ENCODE measurements at regions of chr1 and their contacts with region 1.

Region 1: DNA sequence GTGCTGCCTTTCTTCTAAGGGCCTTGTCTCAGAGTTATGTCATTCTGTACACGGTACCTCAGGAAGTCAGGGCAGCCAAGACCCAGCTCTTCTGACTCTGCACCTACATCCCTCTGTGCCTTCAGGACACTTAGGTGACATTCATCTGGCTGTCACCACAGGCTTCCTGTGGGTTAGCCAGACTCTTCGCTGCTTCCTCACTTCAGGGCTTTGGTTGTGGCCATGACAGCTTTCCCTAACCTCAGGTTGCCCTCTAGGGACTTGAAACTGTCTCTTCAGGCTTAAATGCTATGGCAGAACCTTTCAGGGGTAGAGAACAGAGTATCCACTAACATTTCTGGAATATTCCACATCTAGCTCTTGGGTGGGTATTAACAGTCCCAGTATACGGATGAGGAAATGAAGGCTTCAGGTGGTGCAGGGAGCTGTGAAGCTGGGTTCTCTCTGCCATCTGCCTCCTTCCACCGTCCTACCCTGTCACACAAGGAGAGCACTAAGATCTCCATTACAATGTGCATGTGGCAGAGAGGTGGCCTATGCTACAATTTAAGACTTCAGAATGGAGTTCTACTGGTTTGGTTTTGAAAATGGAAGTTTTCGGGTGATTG is 9.9 kb downstream of the TSSK3 start:
- DNase-seq: no peak
- H3K4me3 ChIP-seq: no peak overlapping the region
- H3K27ac ChIP-seq: no peak overlapping the region
- H3K4me1 ChIP-seq: no peaks in the 10 kb centered on the region
- H3K27me3 ChIP-seq: no peaks in the 10 kb centered on the region
- CTCF ChIP-seq: peak in 1 of 3 experiments; percentile 19; a peak in 1 of 4 replicates
- EP300 ChIP-seq: no peak
- POLR2A ChIP-seq: no peak
- RAD21 ChIP-seq: peak; percentile 33 to 41; a peak in 3 of 4 replicates

Region 2: DNA sequence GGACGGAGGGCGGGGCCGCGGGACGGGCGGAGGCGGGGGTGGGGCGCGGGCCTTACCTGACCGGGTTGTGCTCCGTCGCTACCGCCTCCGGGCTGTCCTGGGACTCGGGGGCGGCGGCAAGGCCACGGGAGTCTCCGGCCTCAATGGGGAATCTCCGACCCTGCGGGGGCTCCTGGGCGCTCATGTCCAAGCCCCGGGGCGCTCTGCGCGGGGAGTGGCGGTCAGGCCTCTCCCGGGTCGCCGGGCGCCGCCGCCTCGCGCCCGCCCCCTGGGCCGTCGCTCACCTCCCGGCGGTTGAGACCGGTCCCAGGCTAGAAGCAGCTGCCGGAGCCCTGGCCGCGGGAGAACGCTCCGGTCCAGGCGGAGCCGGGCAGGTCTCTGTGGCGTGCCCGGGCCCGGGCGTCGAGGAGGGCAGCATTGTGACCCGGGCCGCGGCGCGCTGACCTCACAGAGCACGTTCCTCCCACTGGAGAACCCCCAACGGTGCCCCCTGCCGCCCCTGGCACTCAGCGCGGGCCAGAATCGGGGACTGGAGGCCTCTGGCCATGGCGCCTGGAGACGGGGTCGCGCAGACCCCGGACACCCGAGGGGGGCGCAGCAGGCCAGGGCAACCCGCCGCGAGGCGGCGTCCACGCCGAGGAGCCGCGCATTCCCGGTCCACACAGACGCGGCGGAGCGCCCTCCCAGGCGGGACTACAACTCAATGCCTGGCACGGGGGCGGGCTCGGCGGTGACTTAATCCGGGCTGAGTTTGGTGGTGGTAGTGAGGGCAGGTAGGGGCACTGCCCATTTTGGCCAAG is 10.4 kb before region 1 on chr1:
- CTCF ChIA-PET with region 1: interaction called, 6 read pairs
- POLR2A ChIA-PET with region 1: interaction called, 17 read pairs
- DNase-seq: peak in 1 of 2 experiments; percentile 82
- H3K4me3 ChIP-seq: peak overlapping the region; percentile 11 to 53 (median 26)
- H3K27ac ChIP-seq: no peak overlapping the region
- H3K4me1 ChIP-seq: peaks cover 0 to 3% (median 1%) of the 10 kb centered on the region in 4 experiments; a peak in 4 of 7 replicates
- H3K27me3 ChIP-seq: peaks cover 3 to 24% (median 14%) of the 10 kb centered on the region in 4 experiments
- CTCF ChIP-seq: peak in 2 of 3 experiments; percentile 21 to 23; a peak in 2 of 4 replicates
- EP300 ChIP-seq: no peak
- POLR2A ChIP-seq: peak; percentile 17 to 51; a peak in 2 of 3 replicates
- RAD21 ChIP-seq: no peak; a peak in 1 of 4 replicates

Measured in H1 (cell line).